Right cardiac atrium (tissue), 5 donors: ENCODE measurements at regions of chr10 and their contacts with region 1.

Region 1: DNA sequence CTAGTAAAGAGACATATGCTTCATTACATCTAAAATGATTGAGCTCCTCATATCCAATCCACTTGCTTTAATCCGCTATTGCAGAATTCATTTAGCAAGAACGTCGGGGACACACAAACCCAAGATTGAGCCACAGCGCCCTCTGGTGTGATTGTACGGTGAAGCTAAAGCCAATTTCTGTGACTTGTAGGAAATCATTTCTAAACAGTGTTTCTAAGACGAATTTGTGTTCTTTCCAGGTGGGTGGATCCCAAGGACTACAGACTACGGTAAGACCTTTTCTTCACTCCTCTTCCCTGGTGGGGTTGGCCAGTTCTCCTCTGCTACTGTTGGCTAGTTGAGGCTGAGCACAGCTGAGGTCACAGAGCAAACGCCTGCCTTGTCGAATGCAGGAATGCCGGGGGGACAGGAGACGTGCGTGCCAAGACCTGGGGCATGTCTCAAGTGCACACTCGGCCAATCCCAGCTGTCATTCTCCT is 5.2 kb downstream of the DMBT1 start:
- DNase-seq: peak; percentile 77 to 92 (median 89)
- ATAC-seq: peak; percentile 48 to 74
- H3K4me3 ChIP-seq: no peak overlapping the region
- H3K27ac ChIP-seq: no peak overlapping the region
- H3K4me1 ChIP-seq: peaks cover 3% of the 10 kb centered on the region
- H3K27me3 ChIP-seq: no peaks in the 10 kb centered on the region

Region 2: GRCh38 chr10:122298598-122299301 is 267.0 kb before region 1 on chr10:
- intact Hi-C with region 1: loop called (anchors 2 to 10 kb)
- DNase-seq: peak; percentile 66 to 90 (median 87)
- ATAC-seq: peak; percentile 82 to 86
- H3K4me3 ChIP-seq: no peak overlapping the region
- H3K27ac ChIP-seq: no peak overlapping the region
- H3K4me1 ChIP-seq: no peaks in the 10 kb centered on the region
- H3K27me3 ChIP-seq: no peaks in the 10 kb centered on the region

Region 3: DNA sequence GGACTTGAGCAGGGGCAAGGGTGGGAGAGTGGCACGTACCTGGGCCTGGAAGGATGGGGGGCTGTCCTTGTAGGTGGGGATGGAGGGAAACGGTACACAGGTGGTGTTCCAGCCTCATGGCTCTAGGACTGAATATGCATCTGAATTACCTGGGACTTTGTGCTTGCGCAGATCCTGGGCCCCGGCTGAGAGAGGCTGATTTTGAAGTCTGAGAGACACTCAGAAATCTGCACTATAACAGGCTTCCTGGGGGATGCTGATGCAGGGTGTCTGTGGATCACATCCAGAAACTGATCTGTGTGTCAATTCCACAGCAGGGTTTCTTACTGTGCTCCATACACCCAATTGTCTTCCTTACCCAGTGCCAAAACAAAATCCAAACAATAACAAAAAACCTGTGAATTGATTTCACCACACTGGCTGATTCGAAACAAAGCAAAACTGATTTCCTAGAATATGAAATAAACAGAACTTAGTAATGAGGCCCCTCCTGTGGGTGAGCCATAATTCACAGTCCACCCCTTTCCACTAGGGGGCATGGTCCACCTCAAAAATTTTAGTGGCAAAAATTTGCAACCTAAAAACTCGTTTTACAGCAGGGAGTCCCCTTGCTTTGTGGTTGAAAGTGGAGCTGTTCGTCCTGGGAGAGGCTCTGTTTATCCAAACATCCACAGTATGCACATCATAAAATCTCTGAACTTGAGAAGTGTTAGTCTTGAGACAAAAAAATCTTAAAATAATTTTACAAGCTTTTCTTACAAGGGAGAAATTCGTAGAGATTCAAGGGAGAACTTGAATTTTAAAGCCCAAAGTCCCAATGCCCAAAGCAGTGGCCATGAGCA is 223.3 kb before region 1 on chr10:
- intact Hi-C with region 1: loop called in 1 of 4 experiments (anchors 10 kb)
- DNase-seq: no peak
- ATAC-seq: peak in 1 of 2 donors; percentile 43
- H3K4me3 ChIP-seq: no peak overlapping the region
- H3K27ac ChIP-seq: no peak overlapping the region
- H3K4me1 ChIP-seq: no peaks in the 10 kb centered on the region
- H3K27me3 ChIP-seq: no peaks in the 10 kb centered on the region

Region 4: GRCh38 chr10:122435212-122435827 is 130.4 kb before region 1 on chr10:
- intact Hi-C with region 1: loop called in 3 of 4 experiments (anchors 5 to 10 kb)
- DNase-seq: no peak
- ATAC-seq: no peak
- H3K4me3 ChIP-seq: no peak overlapping the region
- H3K27ac ChIP-seq: no peak overlapping the region
- H3K4me1 ChIP-seq: no peaks in the 10 kb centered on the region
- H3K27me3 ChIP-seq: no peaks in the 10 kb centered on the region

Region 5: GRCh38 chr10:122446668-122447423 is 118.9 kb before region 1 on chr10:
- intact Hi-C with region 1: loop called in 3 of 4 experiments (anchors 5 to 10 kb)
- DNase-seq: no peak
- ATAC-seq: peak; percentile 60 to 62
- H3K4me3 ChIP-seq: no peak overlapping the region
- H3K27ac ChIP-seq: no peak overlapping the region
- H3K4me1 ChIP-seq: peaks cover 2% of the 10 kb centered on the region
- H3K27me3 ChIP-seq: no peaks in the 10 kb centered on the region

Region 6: GRCh38 chr10:122459561-122460273 is 106.0 kb before region 1 on chr10:
- intact Hi-C with region 1: loop called in 1 of 4 experiments (anchors 10 kb)
- DNase-seq: no peak
- ATAC-seq: no peak
- H3K4me3 ChIP-seq: no peak overlapping the region
- H3K27ac ChIP-seq: no peak overlapping the region
- H3K4me1 ChIP-seq: peaks cover 9% of the 10 kb centered on the region
- H3K27me3 ChIP-seq: no peaks in the 10 kb centered on the region

Region 7: GRCh38 chr10:122692740-122693139 is 127.0 kb after region 1 on chr10:
- intact Hi-C with region 1: no loop called
- DNase-seq: no peak
- ATAC-seq: no peak
- H3K4me3 ChIP-seq: no peak overlapping the region
- H3K27ac ChIP-seq: no peak overlapping the region
- H3K4me1 ChIP-seq: no peaks in the 10 kb centered on the region
- H3K27me3 ChIP-seq: no peaks in the 10 kb centered on the region

Region 8: GRCh38 chr10:122703439-122704118 is 137.8 kb after region 1 on chr10:
- intact Hi-C with region 1: loop called in 2 of 4 experiments (anchors 2 to 10 kb)
- DNase-seq: peak; percentile 71 to 88 (median 85)
- ATAC-seq: peak; percentile 90 to 91
- H3K4me3 ChIP-seq: no peak overlapping the region
- H3K27ac ChIP-seq: no peak overlapping the region
- H3K4me1 ChIP-seq: no peaks in the 10 kb centered on the region
- H3K27me3 ChIP-seq: no peaks in the 10 kb centered on the region